ENCODE measurements at regions of chr10 and their contacts with region 1.

Region 1: GRCh38 chr10:119445311-119445934 is 97.1 kb downstream of the RGS10 start:
- DNase-seq: peak; percentile 89
- ATAC-seq: peak; percentile 85
- H3K4me3 Mint-ChIP-seq: no peak overlapping the region
- H3K27ac Mint-ChIP-seq: peak overlapping the region; percentile 77
- H3K4me1 Mint-ChIP-seq: peaks cover 20% of the 10 kb centered on the region
- H3K27me3 Mint-ChIP-seq: no peaks in the 10 kb centered on the region

Region 2: DNA sequence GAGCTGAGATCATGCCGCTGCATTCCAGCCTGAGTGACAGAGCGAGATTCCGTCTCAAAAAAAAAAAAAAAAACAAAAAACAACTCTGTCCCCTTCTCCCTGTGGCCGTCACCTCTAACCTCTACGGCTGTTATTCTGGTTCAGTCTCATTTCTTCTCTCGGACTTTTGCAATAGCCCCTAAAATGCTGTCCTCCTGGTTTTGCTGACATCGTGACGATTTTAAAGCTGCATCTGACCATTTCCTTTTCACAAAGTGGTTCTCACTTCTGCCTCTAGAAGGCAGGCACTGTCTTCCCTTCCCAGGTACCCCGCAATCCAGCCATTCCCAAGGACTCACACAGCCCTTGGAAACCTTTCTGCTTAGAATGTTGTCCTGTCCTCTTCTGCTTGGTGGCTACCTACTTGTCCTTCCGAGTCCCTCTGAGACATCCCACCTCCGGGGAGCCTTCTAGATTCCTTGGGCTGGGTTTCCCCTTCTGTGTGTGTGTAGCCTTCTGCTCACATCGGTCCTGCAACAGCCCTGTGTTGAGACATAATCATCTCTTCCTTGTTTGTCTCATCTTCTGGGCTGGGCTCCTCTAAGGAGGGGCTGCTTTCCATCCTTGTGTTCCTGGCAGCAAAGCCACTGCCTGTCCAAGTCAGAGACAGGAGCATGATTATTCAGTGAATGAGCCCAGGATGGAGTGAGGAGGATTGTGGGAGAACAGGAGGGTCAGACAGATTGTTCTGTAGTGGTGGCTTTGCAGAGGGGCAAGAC is 155.0 kb before region 1 on chr10:
- CTCF ChIA-PET with region 1: no interaction called
- POLR2A ChIA-PET with region 1: no interaction called
- DNase-seq: no peak
- ATAC-seq: no peak
- H3K4me3 Mint-ChIP-seq: no peak overlapping the region
- H3K27ac Mint-ChIP-seq: no peak overlapping the region
- H3K4me1 Mint-ChIP-seq: peaks cover 65% of the 10 kb centered on the region
- H3K27me3 Mint-ChIP-seq: peaks cover 2% of the 10 kb centered on the region

Region 3: GRCh38 chr10:119431768-119432135 is 13.7 kb before region 1 on chr10:
- CTCF ChIA-PET with region 1: interaction called, 14 read pairs
- POLR2A ChIA-PET with region 1: no interaction called
- DNase-seq: no peak
- ATAC-seq: no peak
- H3K4me3 Mint-ChIP-seq: no peak overlapping the region
- H3K27ac Mint-ChIP-seq: no peak overlapping the region
- H3K4me1 Mint-ChIP-seq: peaks cover 18% of the 10 kb centered on the region
- H3K27me3 Mint-ChIP-seq: no peaks in the 10 kb centered on the region